ENCODE measurements at regions of chr6 and their contacts with region 1.

Region 1: DNA sequence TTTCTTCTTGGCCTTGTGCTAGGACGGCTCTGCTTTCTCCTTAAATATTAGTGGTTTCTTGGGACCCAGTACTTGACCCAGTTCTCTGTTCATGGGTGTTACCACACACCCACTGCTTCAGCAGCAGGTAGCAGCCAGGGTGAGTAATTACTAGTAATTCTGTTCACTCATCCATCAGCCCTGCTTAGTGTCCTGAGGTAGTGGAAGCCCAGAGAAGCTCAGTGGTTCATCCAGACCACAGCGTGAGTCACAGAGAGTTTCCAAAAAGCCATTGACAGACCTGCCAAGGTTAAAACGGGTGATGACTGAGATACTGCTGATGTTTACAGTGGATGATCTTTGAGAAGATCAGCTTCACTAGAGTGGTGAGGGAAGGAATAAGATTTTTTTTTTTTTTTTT is 51.7 kb upstream of the HINT3 start:
- DNase-seq: peak; percentile 22
- H3K4me3 Mint-ChIP-seq: no peak overlapping the region
- H3K27ac Mint-ChIP-seq: peak overlapping the region; percentile 73
- H3K4me1 Mint-ChIP-seq: peaks cover 38% of the 10 kb centered on the region
- H3K27me3 Mint-ChIP-seq: no peaks in the 10 kb centered on the region

Region 2: GRCh38 chr6:125918681-125919566 is 14.1 kb after region 1 on chr6:
- intact Hi-C with region 1: loop called (anchors 1 kb)
- DNase-seq: peak; percentile 48
- H3K4me3 Mint-ChIP-seq: peak overlapping the region; percentile 82
- H3K27ac Mint-ChIP-seq: peak overlapping the region; percentile 88
- H3K4me1 Mint-ChIP-seq: peaks cover 46% of the 10 kb centered on the region
- H3K27me3 Mint-ChIP-seq: no peaks in the 10 kb centered on the region

Measured in activated T-helper 2 cell treated with anti-CD3 and anti-CD28 coated beads, Interferon-gamma antibody, Interleukin-2, Interleukin-4, amounts not matched to agents 10 μg/mL and 5 μg/mL and 100 μg/mL, durations not matched to agents 14 hours and 24 hours and 36 hours (primary cell).